ENCODE measurements at regions of chr21 and their contacts with region 1.

Region 1: GRCh38 chr21:37366482-37367316 is at the start of gene DYRK1A:
- DNase-seq: peak; percentile 94 to 100 (median 99)
- ATAC-seq: peak; percentile 89 to 95 (median 89)
- H3K4me3 ChIP-seq: peak within 1 kb of the TSS; percentile 80 to 98 (median 89)
- H3K27ac ChIP-seq: peak within 1 kb of the TSS; percentile 98 to 100 (median 100)
- H3K4me1 ChIP-seq: peaks cover 17 to 32% (median 24%) of the 10 kb centered on the region in 3 donors
- H3K27me3 ChIP-seq: no peaks in the 10 kb centered on the region
- CTCF ChIP-seq: no peak
- total RNA-seq, gene DYRK1A: 20.4 to 37.9 (median 23.2) TPM

Region 2: GRCh38 chr21:36945496-36946138 is 421.1 kb before region 1 on chr21:
- intact Hi-C with region 1: no loop called
- DNase-seq: no peak
- ATAC-seq: no peak
- H3K4me3 ChIP-seq: no peak overlapping the region
- H3K27ac ChIP-seq: no peak overlapping the region
- H3K4me1 ChIP-seq: no peaks in the 10 kb centered on the region
- H3K27me3 ChIP-seq: no peaks in the 10 kb centered on the region
- CTCF ChIP-seq: no peak

Region 3: GRCh38 chr21:37267269-37268184 is 99.2 kb before region 1 on chr21 and contains the start of gene VPS26C:
- intact Hi-C with region 1: loop called in 2 of 3 experiments (anchors 5 to 10 kb)
- DNase-seq: peak; percentile 95 to 99 (median 99)
- ATAC-seq: peak; percentile 89 to 96 (median 92)
- H3K4me3 ChIP-seq: peak within 1 kb of the TSS; percentile 80 to 90 (median 84)
- H3K27ac ChIP-seq: peak within 1 kb of the TSS; percentile 93 to 99 (median 98)
- H3K4me1 ChIP-seq: peaks cover 0 to 26% (median 8%) of the 10 kb centered on the region in 3 donors
- H3K27me3 ChIP-seq: no peaks in the 10 kb centered on the region
- CTCF ChIP-seq: no peak
- total RNA-seq, gene VPS26C: 15.7 to 29.9 (median 22.4) TPM